Astrocyte of the cerebellum (primary cell): ENCODE measurements at regions of chr3 and their contacts with region 1.

Region 1: DNA sequence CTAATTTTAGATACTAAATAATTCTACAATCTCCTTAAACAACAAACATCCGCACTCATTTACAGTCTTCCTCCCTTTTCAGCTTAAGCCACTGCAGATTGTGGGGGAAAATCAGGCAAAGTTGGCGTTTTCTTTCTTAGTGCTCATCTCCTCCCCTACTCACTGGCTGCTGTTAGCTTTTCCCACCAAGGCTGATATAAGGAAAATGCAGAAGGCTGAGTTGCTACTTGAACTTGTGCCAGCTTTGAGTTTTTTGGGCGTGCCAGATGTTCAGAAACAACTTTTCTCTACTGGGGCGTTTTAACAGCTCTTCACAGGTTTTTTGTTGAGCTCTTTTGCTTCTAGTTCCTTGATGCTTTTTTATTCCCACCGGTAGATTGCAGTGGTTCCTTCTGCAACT is 222.0 kb downstream of the PYDC2 start:
- DNase-seq: no peak
- H3K4me3 ChIP-seq: no peak overlapping the region
- CTCF ChIP-seq: no peak

Region 2: GRCh38 chr3:191350396-191351090 is 332.4 kb before region 1 on chr3:
- in situ Hi-C with region 1: no loop called
- DNase-seq: no peak
- H3K4me3 ChIP-seq: no peak overlapping the region
- CTCF ChIP-seq: no peak

Region 3: DNA sequence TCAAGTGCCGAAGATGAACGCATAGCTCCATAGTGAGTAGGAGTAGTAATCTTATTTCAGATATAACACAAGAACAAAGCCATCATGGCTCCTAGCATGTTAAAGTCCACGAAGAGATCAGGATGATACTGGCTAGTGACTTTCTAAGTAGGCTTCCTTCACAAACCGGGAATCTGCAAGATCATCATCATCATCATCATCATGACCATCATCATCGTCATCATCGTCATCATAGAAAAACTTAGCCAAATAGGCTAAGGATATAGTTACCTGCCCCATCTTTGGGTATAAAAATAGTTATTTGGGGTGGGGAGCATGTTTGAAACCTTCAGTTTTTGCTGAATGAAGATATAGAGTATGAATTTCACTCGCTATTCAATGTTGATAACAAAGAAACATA is 164.1 kb before region 1 on chr3:
- in situ Hi-C with region 1: no loop called
- DNase-seq: no peak
- H3K4me3 ChIP-seq: no peak overlapping the region
- CTCF ChIP-seq: no peak

Region 4: DNA sequence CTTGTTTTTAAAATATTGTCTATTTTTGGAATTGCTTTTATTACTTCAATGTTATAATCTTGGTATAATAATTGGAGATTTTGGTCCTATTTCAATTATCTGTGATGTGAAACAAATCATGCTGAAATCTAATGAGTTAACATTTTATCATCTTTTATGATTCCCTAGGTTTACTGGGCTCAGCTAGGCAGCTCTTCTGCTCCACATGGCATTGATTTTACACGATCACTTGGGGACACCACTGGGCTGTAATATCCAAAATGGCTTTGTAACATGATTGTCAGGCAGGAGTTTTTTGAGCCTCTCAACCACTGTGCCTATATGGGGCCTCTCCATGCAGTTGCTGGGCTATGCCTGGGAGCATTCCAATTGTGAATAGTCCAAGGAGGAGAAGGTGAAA is 58.7 kb before region 1 on chr3:
- in situ Hi-C with region 1: loop called (anchors 5 kb)
- DNase-seq: no peak
- H3K4me3 ChIP-seq: no peak overlapping the region
- CTCF ChIP-seq: no peak

Region 5: DNA sequence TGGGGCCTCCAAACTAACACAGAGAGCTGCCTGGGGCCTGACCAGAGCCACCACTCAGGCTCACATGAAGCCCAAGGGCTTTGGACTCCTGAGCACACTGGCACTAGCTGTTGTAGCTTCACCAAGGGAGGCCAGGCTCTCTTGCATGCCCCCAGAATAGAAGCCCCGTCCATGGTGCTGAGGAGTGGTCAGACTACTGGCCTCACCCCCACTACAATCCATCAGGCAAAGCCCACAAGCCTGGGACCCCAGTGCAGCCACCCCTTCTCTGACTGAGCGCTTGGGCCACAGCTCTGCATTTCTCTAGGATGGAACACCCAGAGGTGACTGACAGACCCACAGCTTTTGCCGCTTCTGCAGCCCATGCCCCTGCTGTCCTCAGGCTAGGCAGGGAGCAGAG is 41.2 kb before region 1 on chr3:
- in situ Hi-C with region 1: no loop called
- DNase-seq: no peak
- H3K4me3 ChIP-seq: no peak overlapping the region
- CTCF ChIP-seq: no peak

Region 6: GRCh38 chr3:191753196-191753595 is 70.2 kb after region 1 on chr3:
- in situ Hi-C with region 1: no loop called
- DNase-seq: no peak
- H3K4me3 ChIP-seq: no peak overlapping the region
- CTCF ChIP-seq: no peak